RWPE1 (cell line): ENCODE measurements at regions of chr22 and their contacts with region 1.

Region 1: GRCh38 chr22:24976442-24977218 is 24.1 kb downstream of the KIAA1671 start:
- DNase-seq: no peak
- H3K27ac ChIP-seq: peak overlapping the region; percentile 99
- CTCF ChIP-seq: no peak

Region 2: DNA sequence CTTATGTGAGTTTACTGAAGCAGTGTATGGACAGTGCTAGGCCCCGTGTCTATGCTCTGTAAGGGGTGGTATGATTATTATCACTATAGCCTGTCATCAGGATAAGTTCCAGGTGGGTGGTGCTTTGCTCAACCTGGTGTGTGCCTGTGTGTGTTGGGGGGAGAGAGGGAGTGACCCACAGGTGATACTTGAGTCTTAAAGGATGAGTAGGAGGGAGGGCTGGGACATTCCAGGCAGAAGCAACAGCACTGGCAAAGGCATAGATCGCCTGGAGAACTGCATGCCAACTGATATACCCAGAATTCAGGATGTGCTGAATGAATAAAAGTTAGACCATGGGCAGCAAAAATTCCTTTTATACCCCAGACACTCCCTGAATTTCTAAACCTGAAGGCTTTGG is 19.6 kb before region 1 on chr22:
- CTCF ChIA-PET with region 1: no interaction called
- POLR2A ChIA-PET with region 1: interaction called, 10 read pairs
- DNase-seq: no peak
- H3K27ac ChIP-seq: peak overlapping the region; percentile 97
- CTCF ChIP-seq: no peak